H1 (cell line): ENCODE measurements at regions of chr20 and their contacts with region 1.

Region 1: GRCh38 chr20:43456809-43457639 is 672 bp upstream of the SRSF6 start:
- DNase-seq: peak; percentile 81 to 86
- H3K4me3 ChIP-seq: peak overlapping the region; percentile 90 to 99 (median 96)
- H3K27ac ChIP-seq: peak overlapping the region; percentile 100
- H3K4me1 ChIP-seq: peaks cover 0 to 4% (median 0%) of the 10 kb centered on the region in 4 experiments; a peak in 2 of 7 replicates
- H3K27me3 ChIP-seq: no peaks in the 10 kb centered on the region
- CTCF ChIP-seq: no peak
- EP300 ChIP-seq: no peak
- POLR2A ChIP-seq: no peak
- RAD21 ChIP-seq: no peak

Region 2: GRCh38 chr20:43331906-43332305 is 125.1 kb before region 1 on chr20:
- CTCF ChIA-PET with region 1: no interaction called
- POLR2A ChIA-PET with region 1: no interaction called
- DNase-seq: no peak
- H3K4me3 ChIP-seq: no peak overlapping the region
- H3K27ac ChIP-seq: no peak overlapping the region
- H3K4me1 ChIP-seq: no peaks in the 10 kb centered on the region
- H3K27me3 ChIP-seq: no peaks in the 10 kb centered on the region
- CTCF ChIP-seq: no peak
- EP300 ChIP-seq: no peak
- POLR2A ChIP-seq: no peak
- RAD21 ChIP-seq: no peak

Region 3: DNA sequence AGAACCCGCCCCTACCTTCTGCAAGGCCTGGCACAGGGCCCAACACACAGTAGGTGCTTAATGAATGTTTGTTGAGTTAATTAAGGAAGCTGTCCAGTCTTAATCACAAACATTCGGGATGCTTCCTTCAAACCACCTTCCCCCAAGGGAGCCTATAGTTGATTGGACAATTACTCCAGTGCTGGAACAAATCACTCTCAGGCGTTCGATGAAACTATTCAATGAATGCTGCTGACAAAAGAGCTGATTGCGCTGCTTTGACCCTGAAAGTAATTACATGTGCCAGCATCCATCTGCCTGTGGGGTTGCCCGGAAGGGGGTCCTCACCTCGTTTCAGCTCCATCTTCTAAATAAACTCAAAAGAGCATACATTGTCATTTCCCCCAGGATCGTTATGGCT is 111.3 kb before region 1 on chr20:
- CTCF ChIA-PET with region 1: no interaction called
- POLR2A ChIA-PET with region 1: no interaction called
- DNase-seq: no peak
- H3K4me3 ChIP-seq: no peak overlapping the region
- H3K27ac ChIP-seq: no peak overlapping the region
- H3K4me1 ChIP-seq: no peaks in the 10 kb centered on the region; a peak in 1 of 7 replicates
- H3K27me3 ChIP-seq: peaks cover 0 to 4% (median 1%) of the 10 kb centered on the region in 4 experiments; a peak in 2 of 7 replicates
- CTCF ChIP-seq: no peak
- EP300 ChIP-seq: no peak
- POLR2A ChIP-seq: no peak
- RAD21 ChIP-seq: no peak

Region 4: DNA sequence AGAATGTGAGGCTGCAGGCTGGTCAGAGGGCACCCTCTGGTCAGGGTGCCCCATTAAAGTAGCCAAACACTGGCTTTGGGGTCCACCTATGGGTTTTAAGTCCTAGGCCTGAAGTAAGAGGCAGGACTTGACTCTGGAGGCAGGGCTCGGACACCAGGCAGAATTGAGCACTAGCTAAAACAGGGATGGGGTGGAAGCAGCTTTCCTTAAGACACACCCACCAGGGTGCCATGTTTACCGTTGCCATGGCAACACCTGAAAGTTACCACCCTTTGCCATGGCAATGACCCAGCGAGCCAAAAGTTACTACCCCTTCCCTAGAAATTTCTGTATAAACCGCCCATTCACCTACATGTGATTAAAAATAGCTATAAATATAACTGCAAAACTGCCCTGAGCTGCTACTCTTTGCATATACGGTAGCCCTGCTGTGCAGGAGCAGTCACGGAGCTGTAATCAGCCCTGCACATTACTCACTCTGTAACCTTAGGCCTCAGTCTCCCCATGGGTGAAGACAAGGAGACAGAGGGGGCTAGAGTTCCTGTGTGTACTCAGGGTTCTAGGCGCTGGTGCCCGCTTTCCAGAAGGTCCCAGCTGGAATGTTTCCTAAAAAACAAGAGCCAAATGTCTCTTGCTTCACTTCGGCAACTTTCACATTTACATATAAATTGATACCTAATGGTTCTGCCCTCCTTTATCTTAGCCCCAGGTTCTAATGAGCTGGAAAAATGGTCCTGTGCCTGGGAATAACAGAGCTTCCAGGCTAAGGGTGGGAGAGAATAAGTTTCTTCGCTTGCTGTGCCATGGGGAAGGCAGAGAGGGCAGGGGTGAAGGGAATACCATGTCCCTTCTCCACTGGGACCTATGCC is 26.5 kb before region 1 on chr20:
- CTCF ChIA-PET with region 1: no interaction called
- POLR2A ChIA-PET with region 1: interaction called, 27 read pairs
- DNase-seq: peak in 1 of 2 experiments; percentile 77
- H3K4me3 ChIP-seq: peak overlapping the region in 3 of 4 experiments; percentile 25 to 43 (median 27); a peak in 4 of 8 replicates
- H3K27ac ChIP-seq: peak overlapping the region; percentile 41; the same call in 1 of the 2 replicates
- H3K4me1 ChIP-seq: peaks cover 3 to 13% (median 6%) of the 10 kb centered on the region in 4 experiments; a peak in 5 of 7 replicates
- H3K27me3 ChIP-seq: no peaks in the 10 kb centered on the region; a peak in 1 of 7 replicates
- CTCF ChIP-seq: no peak
- EP300 ChIP-seq: no peak
- POLR2A ChIP-seq: no peak
- RAD21 ChIP-seq: no peak

Region 5: GRCh38 chr20:43472671-43473380 is 15.8 kb after region 1 on chr20:
- CTCF ChIA-PET with region 1: interaction called, 5 read pairs
- POLR2A ChIA-PET with region 1: interaction called, 81 read pairs
- DNase-seq: no peak
- H3K4me3 ChIP-seq: no peak overlapping the region
- H3K27ac ChIP-seq: no peak overlapping the region
- H3K4me1 ChIP-seq: no peaks in the 10 kb centered on the region
- H3K27me3 ChIP-seq: no peaks in the 10 kb centered on the region
- CTCF ChIP-seq: peak in 2 of 3 experiments; percentile 9 to 34; a peak in 2 of 4 replicates
- EP300 ChIP-seq: no peak
- POLR2A ChIP-seq: no peak
- RAD21 ChIP-seq: peak in 1 of 2 experiments; percentile 7; a peak in 2 of 4 replicates

Region 6: GRCh38 chr20:43507150-43508080 is 50.4 kb after region 1 on chr20 and contains the start of gene L3MBTL1:
- CTCF ChIA-PET with region 1: interaction called, 5 read pairs
- POLR2A ChIA-PET with region 1: interaction called, 72 read pairs
- DNase-seq: peak in 1 of 2 experiments; percentile 84
- H3K4me3 ChIP-seq: peak within 1 kb of the TSS; percentile 60 to 79 (median 62)
- H3K27ac ChIP-seq: no peak within 1 kb of the TSS
- H3K4me1 ChIP-seq: peaks cover 2 to 5% (median 5%) of the 10 kb centered on the region in 4 experiments; a peak in 6 of 7 replicates
- H3K27me3 ChIP-seq: peaks cover 4 to 18% (median 12%) of the 10 kb centered on the region in 4 experiments
- CTCF ChIP-seq: no peak
- EP300 ChIP-seq: no peak
- POLR2A ChIP-seq: peak in 1 of 2 experiments; percentile 63; a peak in 2 of 3 replicates
- RAD21 ChIP-seq: no peak
- total RNA-seq, gene L3MBTL1: 13.6 and 17.0 TPM in 2 replicates

Region 7: GRCh38 chr20:43530321-43531090 is 73.5 kb after region 1 on chr20:
- CTCF ChIA-PET with region 1: no interaction called
- POLR2A ChIA-PET with region 1: interaction called, 23 read pairs
- DNase-seq: no peak
- H3K4me3 ChIP-seq: no peak overlapping the region
- H3K27ac ChIP-seq: no peak overlapping the region
- H3K4me1 ChIP-seq: no peaks in the 10 kb centered on the region
- H3K27me3 ChIP-seq: no peaks in the 10 kb centered on the region
- CTCF ChIP-seq: no peak
- EP300 ChIP-seq: no peak
- POLR2A ChIP-seq: no peak
- RAD21 ChIP-seq: no peak

Region 8: DNA sequence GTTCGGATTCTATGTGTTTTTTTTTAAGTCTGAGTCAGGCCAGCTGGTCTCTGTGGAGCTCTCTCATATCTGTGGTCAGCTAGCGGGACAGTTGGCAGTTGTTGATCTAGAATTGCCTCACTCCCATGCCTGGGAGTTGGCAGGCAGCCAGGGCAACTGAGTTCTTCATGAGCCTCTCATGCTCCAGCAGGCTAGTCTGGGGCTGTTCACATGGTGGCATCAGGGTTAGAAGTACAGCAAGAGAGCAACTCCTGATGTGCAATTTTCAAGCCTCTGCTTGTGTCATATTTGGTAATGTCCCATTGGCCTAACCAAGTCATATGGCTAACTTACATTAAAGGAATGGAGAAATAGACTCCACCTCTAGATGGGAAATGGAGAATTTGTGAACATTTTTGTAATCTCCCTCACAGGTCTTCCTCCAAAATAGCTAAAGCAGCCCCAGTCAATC is 127.0 kb after region 1 on chr20:
- CTCF ChIA-PET with region 1: interaction called, 3 read pairs
- POLR2A ChIA-PET with region 1: interaction called, 22 read pairs
- DNase-seq: no peak
- H3K4me3 ChIP-seq: no peak overlapping the region
- H3K27ac ChIP-seq: no peak overlapping the region
- H3K4me1 ChIP-seq: peaks cover 0 to 8% (median 6%) of the 10 kb centered on the region in 4 experiments; a peak in 3 of 7 replicates
- H3K27me3 ChIP-seq: no peaks in the 10 kb centered on the region
- CTCF ChIP-seq: no peak
- EP300 ChIP-seq: no peak
- POLR2A ChIP-seq: no peak
- RAD21 ChIP-seq: no peak